ENCODE measurements at regions of chr14 and their contacts with region 1.

Region 1: GRCh38 chr14:69586404-69586803 is 11.7 kb upstream of the CCDC177 start:
- DNase-seq: no peak
- H3K4me3 ChIP-seq: no peak overlapping the region
- CTCF ChIP-seq: no peak

Region 2: GRCh38 chr14:69553221-69553620 is 33.2 kb before region 1 on chr14:
- CTCF ChIA-PET with region 1: interaction called, 12 read pairs
- POLR2A ChIA-PET with region 1: no interaction called
- DNase-seq: no peak
- H3K4me3 ChIP-seq: no peak overlapping the region
- CTCF ChIP-seq: no peak

Region 3: GRCh38 chr14:69708586-69709174 is 122.3 kb after region 1 on chr14:
- CTCF ChIA-PET with region 1: interaction called, 18 read pairs
- POLR2A ChIA-PET with region 1: no interaction called
- DNase-seq: no peak
- H3K4me3 ChIP-seq: no peak overlapping the region
- CTCF ChIP-seq: peak; percentile 25